ENCODE measurements at regions of chr17 and their contacts with region 1.

Region 1: DNA sequence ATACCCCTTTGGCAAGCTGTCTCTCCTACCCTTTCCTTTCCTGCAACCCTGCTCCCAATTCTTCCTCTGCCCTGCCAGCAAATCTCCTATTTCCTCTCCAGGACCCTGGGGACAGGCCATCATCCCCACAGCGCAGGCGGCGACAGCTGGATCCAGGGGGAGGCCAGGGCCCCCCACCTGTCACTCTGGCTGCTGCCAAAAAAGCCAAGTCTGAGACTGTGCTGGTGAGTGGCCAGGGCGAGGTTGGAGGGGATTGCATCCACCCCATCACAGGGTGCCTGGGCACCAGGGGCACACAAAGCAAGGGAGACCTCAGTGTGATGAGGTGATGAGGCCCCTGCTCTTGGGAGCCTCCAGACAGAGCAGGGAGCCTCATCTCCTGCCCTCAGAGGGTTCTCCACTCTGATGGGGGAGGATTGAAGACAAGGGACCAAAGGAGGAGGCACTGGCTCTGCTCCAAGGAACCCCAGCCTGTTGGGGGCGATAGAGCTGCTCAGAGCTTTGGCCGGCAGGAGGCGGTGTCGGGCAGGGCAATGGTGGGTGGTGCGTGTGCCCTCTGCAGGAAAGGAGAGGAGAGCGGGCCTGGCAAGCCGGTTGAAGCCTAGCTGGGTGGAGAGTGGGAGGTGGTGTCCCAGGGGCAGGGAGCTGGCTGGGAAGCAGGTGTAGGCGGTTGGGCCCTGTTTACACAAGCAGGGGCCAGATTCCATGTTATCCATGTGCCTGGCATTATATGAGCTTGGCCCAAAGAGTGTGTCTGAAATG is 15.6 kb upstream of the PDK2 start:
- DNase-seq: peak in 1 of 2 experiments; percentile 91
- H3K4me3 ChIP-seq: no peak overlapping the region
- H3K27ac ChIP-seq: no peak overlapping the region
- H3K4me1 ChIP-seq: peaks cover 0 to 4% (median 3%) of the 10 kb centered on the region in 4 experiments; a peak in 3 of 7 replicates
- H3K27me3 ChIP-seq: no peaks in the 10 kb centered on the region; a peak in 2 of 7 replicates
- CTCF ChIP-seq: peak; percentile 100
- EP300 ChIP-seq: no peak
- POLR2A ChIP-seq: no peak
- RAD21 ChIP-seq: peak; percentile 54 to 73; a peak in 3 of 4 replicates

Region 2: DNA sequence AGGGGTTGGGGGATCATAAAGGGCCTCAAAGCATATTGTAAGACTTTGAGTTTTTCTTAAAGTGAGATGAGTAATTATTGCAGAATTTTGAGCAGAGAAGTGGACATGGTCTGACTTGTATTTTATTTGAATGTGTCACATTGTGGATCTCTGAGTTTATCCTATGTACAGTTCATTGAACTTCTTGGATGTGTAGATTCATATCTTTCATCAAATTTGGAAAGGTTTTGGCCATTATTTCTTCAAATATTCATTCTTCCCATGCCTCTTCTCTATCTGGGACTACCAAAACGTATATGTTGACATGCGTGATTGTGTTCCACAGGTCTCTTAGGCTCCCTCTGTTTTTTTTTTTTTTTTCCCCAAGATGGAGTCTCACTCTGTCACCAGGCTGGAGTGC is 70.2 kb before region 1 on chr17:
- CTCF ChIA-PET with region 1: no interaction called
- POLR2A ChIA-PET with region 1: no interaction called
- DNase-seq: no peak
- H3K4me3 ChIP-seq: no peak overlapping the region
- H3K27ac ChIP-seq: no peak overlapping the region
- H3K4me1 ChIP-seq: no peaks in the 10 kb centered on the region
- H3K27me3 ChIP-seq: no peaks in the 10 kb centered on the region
- CTCF ChIP-seq: no peak
- EP300 ChIP-seq: no peak
- POLR2A ChIP-seq: no peak
- RAD21 ChIP-seq: no peak

Region 3: GRCh38 chr17:50020841-50021599 is 58.5 kb before region 1 on chr17:
- CTCF ChIA-PET with region 1: interaction called, 158 read pairs
- POLR2A ChIA-PET with region 1: no interaction called
- DNase-seq: no peak
- H3K4me3 ChIP-seq: no peak overlapping the region
- H3K27ac ChIP-seq: no peak overlapping the region
- H3K4me1 ChIP-seq: no peaks in the 10 kb centered on the region
- H3K27me3 ChIP-seq: no peaks in the 10 kb centered on the region
- CTCF ChIP-seq: no peak
- EP300 ChIP-seq: no peak
- POLR2A ChIP-seq: no peak
- RAD21 ChIP-seq: no peak

Region 4: DNA sequence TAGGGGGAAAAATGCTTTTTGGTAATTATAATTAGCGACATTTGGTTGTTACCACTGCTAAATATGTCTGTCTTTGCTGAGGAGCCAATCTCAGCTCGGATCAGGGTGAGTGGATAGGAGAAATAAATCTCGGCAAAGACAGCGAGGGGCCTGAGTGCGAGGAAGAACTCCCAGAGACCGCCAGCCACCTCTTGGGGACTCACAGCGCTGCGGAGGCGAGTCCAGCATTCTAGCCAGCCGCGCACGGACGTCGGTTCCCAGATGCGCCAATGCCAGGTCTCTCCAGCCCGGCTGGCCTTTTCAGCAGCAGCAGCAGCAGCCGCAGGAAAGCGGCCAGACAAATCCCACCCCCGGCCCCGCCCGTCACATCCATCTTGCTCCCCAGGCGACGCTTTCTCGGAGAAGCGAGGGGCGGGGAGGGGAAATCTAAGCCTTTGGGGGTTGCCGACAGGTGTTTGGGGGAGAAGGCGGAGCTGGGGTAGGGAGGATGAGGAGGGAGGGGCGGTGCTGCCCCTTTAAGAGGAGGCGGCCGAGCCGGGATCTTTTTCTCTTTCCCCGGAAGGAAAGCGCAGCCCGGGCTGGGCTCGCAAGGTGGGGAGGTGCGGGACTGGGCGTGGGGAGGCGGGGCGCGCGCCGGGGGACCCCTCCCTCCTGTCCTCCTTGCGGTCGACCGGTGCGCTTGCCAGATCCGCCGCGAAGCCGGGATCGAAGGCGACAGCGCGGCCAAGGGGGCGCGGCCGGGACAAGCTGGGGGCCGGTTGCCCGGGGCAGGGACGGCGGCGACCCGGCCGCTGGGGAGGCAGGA is 23.9 kb before region 1 on chr17 and contains the start of gene ITGA3:
- CTCF ChIA-PET with region 1: interaction called, 169 read pairs
- POLR2A ChIA-PET with region 1: interaction called, 17 read pairs
- DNase-seq: peak; percentile 84 to 89
- H3K4me3 ChIP-seq: peak within 1 kb of the TSS; percentile 37 to 65 (median 58)
- H3K27ac ChIP-seq: no peak within 1 kb of the TSS
- H3K4me1 ChIP-seq: peaks cover 11 to 21% (median 15%) of the 10 kb centered on the region in 4 experiments
- H3K27me3 ChIP-seq: peaks cover 0 to 13% (median 11%) of the 10 kb centered on the region in 4 experiments; a peak in 5 of 7 replicates
- CTCF ChIP-seq: peak in 2 of 3 experiments; percentile 4 to 17; a peak in 3 of 4 replicates
- EP300 ChIP-seq: no peak
- POLR2A ChIP-seq: no peak
- RAD21 ChIP-seq: no peak
- total RNA-seq, gene ITGA3: 21.7 and 24.2 TPM in 2 replicates

Region 5: DNA sequence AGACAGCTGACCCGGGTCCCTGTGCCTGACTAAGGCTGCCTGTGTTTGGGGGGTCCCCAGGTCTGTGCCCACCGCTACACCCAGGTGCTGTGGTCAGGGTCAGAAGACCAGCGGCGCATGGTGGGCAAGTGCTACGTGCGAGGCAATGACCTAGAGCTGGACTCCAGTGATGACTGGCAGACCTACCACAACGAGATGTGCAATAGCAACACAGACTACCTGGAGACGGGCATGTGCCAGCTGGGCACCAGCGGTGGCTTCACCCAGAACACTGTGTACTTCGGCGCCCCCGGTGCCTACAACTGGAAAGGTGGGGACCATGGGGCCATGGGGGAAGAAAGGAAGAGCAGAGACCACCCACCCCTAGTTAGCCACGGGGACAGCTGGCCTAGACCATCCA is 11.5 kb before region 1 on chr17:
- CTCF ChIA-PET with region 1: interaction called, 169 read pairs
- POLR2A ChIA-PET with region 1: no interaction called
- DNase-seq: no peak
- H3K4me3 ChIP-seq: no peak overlapping the region
- H3K27ac ChIP-seq: no peak overlapping the region
- H3K4me1 ChIP-seq: peaks cover 0 to 3% (median 2%) of the 10 kb centered on the region in 4 experiments; a peak in 4 of 7 replicates
- H3K27me3 ChIP-seq: no peaks in the 10 kb centered on the region
- CTCF ChIP-seq: peak in 1 of 3 experiments; percentile 6; a peak in 1 of 4 replicates
- EP300 ChIP-seq: no peak
- POLR2A ChIP-seq: no peak
- RAD21 ChIP-seq: no peak

Measured in H1 (cell line).